ENCODE measurements at regions of chr15 and their contacts with region 1.

Region 1: DNA sequence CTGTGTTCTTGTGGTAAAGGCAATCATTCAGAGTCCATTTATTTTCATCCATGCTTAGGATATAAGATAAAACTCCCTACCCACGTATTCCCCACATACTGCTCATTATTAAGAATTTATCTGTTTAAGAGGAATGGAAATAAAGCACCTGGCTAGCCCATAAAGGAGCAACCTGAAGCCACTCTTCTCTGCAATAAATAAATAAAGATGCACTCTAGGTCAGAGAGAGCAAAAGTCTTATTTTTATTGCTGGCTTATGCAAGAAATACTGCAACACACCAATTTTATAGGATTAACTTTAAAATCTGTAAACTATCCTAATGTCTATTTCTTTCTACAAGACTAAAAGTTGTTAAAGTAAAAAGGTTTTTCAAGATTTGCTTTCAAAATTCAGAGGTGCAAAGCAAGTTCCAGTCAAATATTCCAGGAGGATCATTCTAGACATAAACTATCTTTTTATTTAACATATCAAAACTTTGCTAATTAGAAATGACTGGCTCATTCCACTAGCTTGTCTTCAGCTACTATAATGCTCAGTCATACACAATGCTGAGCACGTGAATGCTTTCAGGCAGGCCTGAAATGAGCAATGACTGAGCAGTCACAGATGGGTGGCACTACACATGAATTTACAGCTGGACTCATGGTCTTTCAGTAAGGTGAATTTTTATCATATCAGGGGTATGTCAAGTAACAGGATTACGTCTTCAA is 7.1 kb downstream of the TJP1 start:
- DNase-seq: no peak
- H3K4me3 ChIP-seq: no peak overlapping the region
- H3K4me3 Mint-ChIP-seq: no peak overlapping the region
- H3K27ac Mint-ChIP-seq: peak overlapping the region; percentile 2
- H3K4me1 ChIP-seq: peaks cover 71% of the 10 kb centered on the region
- H3K4me1 Mint-ChIP-seq: peaks cover 71% of the 10 kb centered on the region
- H3K27me3 ChIP-seq: no peaks in the 10 kb centered on the region
- H3K27me3 Mint-ChIP-seq: no peaks in the 10 kb centered on the region
- CTCF ChIP-seq: no peak

Region 2: GRCh38 chr15:29756358-29757267 is 58.5 kb before region 1 on chr15:
- CTCF ChIA-PET with region 1: no interaction called
- POLR2A ChIA-PET with region 1: no interaction called
- intact Hi-C with region 1: loop called (anchors 5 kb)
- DNase-seq: no peak
- H3K4me3 ChIP-seq: no peak overlapping the region
- H3K4me3 Mint-ChIP-seq: no peak overlapping the region
- H3K27ac Mint-ChIP-seq: no peak overlapping the region
- H3K4me1 ChIP-seq: no peaks in the 10 kb centered on the region
- H3K4me1 Mint-ChIP-seq: peaks cover 9% of the 10 kb centered on the region
- H3K27me3 ChIP-seq: no peaks in the 10 kb centered on the region
- H3K27me3 Mint-ChIP-seq: no peaks in the 10 kb centered on the region
- CTCF ChIP-seq: no peak

Region 3: DNA sequence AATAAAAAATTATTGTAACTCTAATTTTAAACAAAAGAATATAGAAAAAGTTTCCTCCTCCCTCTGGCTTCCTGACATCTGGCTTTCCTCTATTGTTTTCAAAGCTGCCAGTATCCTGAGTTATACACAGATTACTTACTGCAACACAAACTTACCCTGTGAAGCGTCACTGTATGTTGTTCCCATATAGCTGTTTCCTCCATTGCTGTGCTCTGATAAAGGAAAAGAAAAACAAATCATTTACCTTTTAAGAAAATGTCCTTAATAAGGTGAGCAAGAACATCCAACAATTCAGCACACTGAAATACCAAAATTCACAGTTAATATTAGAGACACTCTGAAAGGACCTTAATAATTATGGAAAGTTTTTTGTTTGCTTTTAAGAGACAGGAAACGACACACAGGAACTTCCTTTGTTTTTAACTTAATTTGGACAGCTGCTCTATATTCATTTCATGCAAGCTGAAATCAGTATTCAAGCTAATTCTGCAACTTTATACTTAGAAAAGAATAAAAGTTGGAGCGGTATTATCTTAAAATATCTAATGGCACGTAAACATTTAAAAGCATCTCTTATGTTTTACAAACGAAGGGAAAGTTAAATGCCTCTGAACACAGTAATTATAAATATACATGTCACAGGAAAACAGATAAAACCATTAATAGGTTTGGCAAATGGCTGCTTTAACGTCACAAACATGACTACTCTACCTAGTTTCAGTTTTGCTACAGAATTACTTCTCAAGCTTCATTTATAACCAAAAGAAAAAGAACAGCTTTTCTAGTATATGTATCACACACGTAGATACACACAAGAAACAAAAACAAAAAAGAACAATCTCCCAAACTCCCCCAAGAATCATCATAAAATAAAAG is 14.4 kb before region 1 on chr15:
- CTCF ChIA-PET with region 1: no interaction called
- POLR2A ChIA-PET with region 1: no interaction called
- intact Hi-C with region 1: no loop called
- DNase-seq: no peak
- H3K4me3 ChIP-seq: no peak overlapping the region
- H3K4me3 Mint-ChIP-seq: no peak overlapping the region
- H3K27ac Mint-ChIP-seq: no peak overlapping the region
- H3K4me1 ChIP-seq: peaks cover 40% of the 10 kb centered on the region
- H3K4me1 Mint-ChIP-seq: peaks cover 40% of the 10 kb centered on the region
- H3K27me3 ChIP-seq: no peaks in the 10 kb centered on the region
- H3K27me3 Mint-ChIP-seq: no peaks in the 10 kb centered on the region
- CTCF ChIP-seq: no peak

Region 4: DNA sequence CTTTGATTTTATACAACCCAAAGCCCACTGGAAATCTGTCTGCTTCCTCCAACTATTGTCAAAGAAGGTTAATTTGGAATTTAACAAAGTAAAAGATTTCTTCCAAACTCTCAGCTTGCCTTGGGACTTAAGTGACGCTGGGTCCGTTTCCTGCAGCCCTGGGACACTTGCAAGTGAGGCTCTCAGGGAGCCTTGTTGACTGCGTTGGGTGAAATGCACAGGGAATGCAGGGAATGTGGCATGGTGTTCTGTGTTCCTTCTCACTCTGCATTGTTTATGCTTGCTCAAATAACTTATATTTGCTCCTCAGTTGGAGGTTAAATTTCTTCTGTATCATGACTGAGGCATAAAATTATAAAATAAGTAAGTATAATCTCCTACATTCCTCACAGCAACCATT is 68.0 kb after region 1 on chr15:
- CTCF ChIA-PET with region 1: no interaction called
- POLR2A ChIA-PET with region 1: no interaction called
- intact Hi-C with region 1: no loop called
- DNase-seq: no peak
- H3K4me3 ChIP-seq: no peak overlapping the region
- H3K4me3 Mint-ChIP-seq: no peak overlapping the region
- H3K27ac Mint-ChIP-seq: no peak overlapping the region
- H3K4me1 ChIP-seq: 0 out of 2 replicates have a peak, but pooled peaks cover 6% of the 10 kb centered on the region
- H3K4me1 Mint-ChIP-seq: no peaks in the 10 kb centered on the region
- H3K27me3 ChIP-seq: no peaks in the 10 kb centered on the region
- H3K27me3 Mint-ChIP-seq: no peaks in the 10 kb centered on the region
- CTCF ChIP-seq: no peak

Measured in Caco-2 (cell line).